ENCODE measurements at regions of chr7 and their contacts with region 1.

Region 1: DNA sequence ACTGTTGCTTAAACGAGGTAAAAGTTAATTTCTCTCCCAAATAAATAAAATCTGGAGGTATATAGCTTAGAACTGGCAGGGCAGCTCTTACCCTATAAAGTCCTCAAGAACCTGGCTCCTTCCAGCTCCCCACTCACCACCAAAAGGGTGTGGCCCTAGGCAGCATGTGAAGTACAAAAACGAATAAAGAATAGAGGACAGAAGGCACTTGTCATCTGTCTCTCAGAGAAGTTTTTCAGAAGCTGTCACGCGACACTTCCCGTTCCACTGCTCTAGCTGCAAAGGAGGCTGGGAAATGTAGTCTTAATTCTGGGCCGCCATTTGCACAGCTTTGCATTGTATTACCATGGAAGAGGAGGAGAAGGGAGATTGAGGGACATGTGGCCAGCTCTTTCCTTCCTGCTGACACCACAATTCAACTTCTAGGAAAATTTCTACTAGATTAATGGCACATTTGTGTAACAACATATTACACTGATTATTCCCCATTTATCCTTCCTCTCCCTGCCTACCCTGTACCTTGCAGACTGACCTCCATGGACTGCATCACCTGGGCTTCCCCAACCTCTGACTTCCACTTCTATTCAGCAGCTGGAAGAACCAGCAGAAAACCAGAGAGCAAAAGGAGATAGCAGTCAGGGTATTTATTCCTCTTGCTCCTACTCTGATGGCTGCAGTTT is 62.2 kb downstream of the CCDC71L start:
- DNase-seq: peak; percentile 87
- ATAC-seq: peak; percentile 99
- H3K4me3 ChIP-seq: peak overlapping the region in 1 of 5 experiments; percentile 41
- H3K4me3 Mint-ChIP-seq: peak overlapping the region; percentile 72
- H3K27ac ChIP-seq: no peak overlapping the region
- H3K27ac Mint-ChIP-seq: peak overlapping the region; percentile 69
- H3K4me1 ChIP-seq: peaks cover 0 to 7% of the 10 kb centered on the region in 2 donors
- H3K4me1 Mint-ChIP-seq: peaks cover 6% of the 10 kb centered on the region
- H3K27me3 ChIP-seq: no peaks in the 10 kb centered on the region
- H3K27me3 Mint-ChIP-seq: no peaks in the 10 kb centered on the region
- CTCF ChIP-seq: no peak

Region 2: GRCh38 chr7:106542550-106543220 is 56.1 kb before region 1 on chr7:
- CTCF ChIA-PET with region 1: interaction called, 8 read pairs
- POLR2A ChIA-PET with region 1: no interaction called
- intact Hi-C with region 1: loop called (anchors 1 kb)
- DNase-seq: peak; percentile 71
- ATAC-seq: peak; percentile 84
- H3K4me3 ChIP-seq: no peak overlapping the region
- H3K4me3 Mint-ChIP-seq: no peak overlapping the region
- H3K27ac ChIP-seq: no peak overlapping the region
- H3K27ac Mint-ChIP-seq: no peak overlapping the region
- H3K4me1 ChIP-seq: peaks cover 0 to 3% of the 10 kb centered on the region in 2 donors
- H3K4me1 Mint-ChIP-seq: peaks cover 4% of the 10 kb centered on the region
- H3K27me3 ChIP-seq: no peaks in the 10 kb centered on the region
- H3K27me3 Mint-ChIP-seq: peaks cover 3% of the 10 kb centered on the region
- CTCF ChIP-seq: peak; percentile 78

Region 3: DNA sequence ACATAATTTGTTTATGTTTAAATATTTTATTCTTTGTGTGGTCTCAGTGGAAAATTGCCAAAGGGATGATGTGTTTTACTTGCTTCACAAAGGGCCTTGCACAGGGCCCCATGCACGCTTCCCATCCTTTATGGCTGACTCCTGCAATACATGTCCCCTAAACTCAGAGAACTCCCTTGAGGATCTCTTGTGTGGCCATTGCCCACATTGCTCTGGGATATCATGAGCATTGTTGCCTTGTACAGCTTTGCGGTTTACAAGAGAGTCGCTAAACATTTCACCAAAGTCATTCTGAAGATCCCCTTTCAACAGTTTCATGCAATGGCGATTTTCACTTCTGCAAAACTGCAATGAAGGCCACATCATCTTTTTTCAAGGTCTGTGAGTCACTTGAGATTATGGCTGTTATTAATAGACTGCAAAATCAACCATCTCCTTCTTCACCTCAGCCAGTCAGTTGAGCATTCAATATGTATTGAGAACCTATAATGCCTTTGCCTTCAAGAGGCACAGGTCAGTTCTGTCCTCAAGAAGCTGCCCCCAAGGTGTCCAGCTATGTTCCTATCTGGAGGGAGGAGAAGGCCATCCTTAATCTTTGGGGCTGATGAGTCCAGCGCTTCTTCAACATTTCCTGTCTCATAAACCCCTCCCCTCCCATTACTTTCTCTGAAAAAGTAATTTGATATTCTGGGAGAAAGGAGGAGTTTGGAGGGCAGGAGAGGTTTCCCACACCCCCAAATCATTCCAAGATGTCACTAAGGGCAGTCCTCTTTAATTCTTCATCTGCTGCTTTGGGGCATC is 46.0 kb before region 1 on chr7:
- CTCF ChIA-PET with region 1: interaction called, 3 read pairs
- POLR2A ChIA-PET with region 1: no interaction called
- intact Hi-C with region 1: loop called (anchors 2 kb)
- DNase-seq: peak; percentile 84
- ATAC-seq: peak; percentile 91
- H3K4me3 ChIP-seq: no peak overlapping the region
- H3K4me3 Mint-ChIP-seq: peak overlapping the region; percentile 40
- H3K27ac ChIP-seq: peak overlapping the region in 1 of 2 donors; percentile 23
- H3K27ac Mint-ChIP-seq: peak overlapping the region; percentile 73
- H3K4me1 ChIP-seq: peaks cover 18 to 20% of the 10 kb centered on the region in 2 donors
- H3K4me1 Mint-ChIP-seq: peaks cover 31% of the 10 kb centered on the region
- H3K27me3 ChIP-seq: no peaks in the 10 kb centered on the region
- H3K27me3 Mint-ChIP-seq: no peaks in the 10 kb centered on the region
- CTCF ChIP-seq: no peak

Region 4: GRCh38 chr7:106609416-106609815 is 10.6 kb after region 1 on chr7:
- CTCF ChIA-PET with region 1: no interaction called
- POLR2A ChIA-PET with region 1: interaction called, 12 read pairs
- intact Hi-C with region 1: no loop called
- DNase-seq: no peak
- ATAC-seq: no peak
- H3K4me3 ChIP-seq: no peak overlapping the region
- H3K4me3 Mint-ChIP-seq: no peak overlapping the region
- H3K27ac ChIP-seq: no peak overlapping the region
- H3K27ac Mint-ChIP-seq: no peak overlapping the region
- H3K4me1 ChIP-seq: no peaks in the 10 kb centered on the region
- H3K4me1 Mint-ChIP-seq: no peaks in the 10 kb centered on the region
- H3K27me3 ChIP-seq: no peaks in the 10 kb centered on the region
- H3K27me3 Mint-ChIP-seq: peaks cover 5% of the 10 kb centered on the region
- CTCF ChIP-seq: no peak

Measured in B cell (primary cell).